Sigmoid colon (tissue), 7 donors: ENCODE measurements at regions of chr10 and their contacts with region 1.

Region 1: DNA sequence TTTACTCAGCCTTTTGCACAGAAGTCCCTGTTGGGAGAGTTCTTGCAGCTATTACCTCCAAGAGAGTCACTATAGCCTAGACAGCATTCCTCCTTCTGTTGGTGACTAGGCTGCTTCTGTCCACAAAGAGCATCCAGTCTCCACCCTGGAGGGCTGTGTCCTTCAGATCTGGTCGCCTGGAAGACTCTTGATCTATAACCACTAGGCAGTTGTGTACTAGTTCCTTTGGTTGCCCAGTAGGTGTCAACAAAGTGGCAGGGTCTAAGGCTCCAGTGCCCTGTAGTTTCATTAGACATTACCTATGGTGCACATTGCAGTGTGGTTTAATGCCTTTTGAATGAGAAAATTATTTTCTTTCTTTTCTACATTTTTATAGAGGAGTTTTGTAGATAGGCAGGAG is 11.3 kb upstream of the AKR1C2 start:
- DNase-seq: no peak
- H3K4me3 ChIP-seq: no peak overlapping the region
- H3K27ac ChIP-seq: no peak overlapping the region
- H3K4me1 ChIP-seq: peaks cover 0 to 6% (median 2%) of the 10 kb centered on the region in 4 donors
- H3K27me3 ChIP-seq: no peaks in the 10 kb centered on the region
- CTCF ChIP-seq: no peak
- EP300 ChIP-seq: no peak
- POLR2A ChIP-seq: no peak

Region 2: GRCh38 chr10:5094265-5095205 is 79.6 kb after region 1 on chr10 and contains the start of gene AKR1C3:
- intact Hi-C with region 1: loop called (anchors 5 kb)
- DNase-seq: no peak
- H3K4me3 ChIP-seq: peak within 1 kb of the TSS; percentile 22 to 50 (median 40)
- H3K27ac ChIP-seq: peak within 1 kb of the TSS; percentile 20 to 60 (median 58)
- H3K4me1 ChIP-seq: no peaks in the 10 kb centered on the region
- H3K27me3 ChIP-seq: no peaks in the 10 kb centered on the region
- CTCF ChIP-seq: peak; percentile 63 to 84 (median 72)
- EP300 ChIP-seq: no peak
- POLR2A ChIP-seq: peak in 1 of 2 donors; percentile 42
- total RNA-seq, gene AKR1C3: 6.1 to 30.5 (median 12.0) TPM